Activated T-helper 1 cell treated with anti-CD3 and anti-CD28 coated beads, Interleukin-12 subunit alpha, Interleukin-12 subunit beta, Interleukin-2, Interleukin-4 antibody, amounts not matched to agents 30 ng/mL and 10 ng/mL and 1 ng/mL, durations not matched to agents 14 hours and 24 hours and 36 hours (primary cell): ENCODE measurements at regions of chr3 and their contacts with region 1.

Region 1: DNA sequence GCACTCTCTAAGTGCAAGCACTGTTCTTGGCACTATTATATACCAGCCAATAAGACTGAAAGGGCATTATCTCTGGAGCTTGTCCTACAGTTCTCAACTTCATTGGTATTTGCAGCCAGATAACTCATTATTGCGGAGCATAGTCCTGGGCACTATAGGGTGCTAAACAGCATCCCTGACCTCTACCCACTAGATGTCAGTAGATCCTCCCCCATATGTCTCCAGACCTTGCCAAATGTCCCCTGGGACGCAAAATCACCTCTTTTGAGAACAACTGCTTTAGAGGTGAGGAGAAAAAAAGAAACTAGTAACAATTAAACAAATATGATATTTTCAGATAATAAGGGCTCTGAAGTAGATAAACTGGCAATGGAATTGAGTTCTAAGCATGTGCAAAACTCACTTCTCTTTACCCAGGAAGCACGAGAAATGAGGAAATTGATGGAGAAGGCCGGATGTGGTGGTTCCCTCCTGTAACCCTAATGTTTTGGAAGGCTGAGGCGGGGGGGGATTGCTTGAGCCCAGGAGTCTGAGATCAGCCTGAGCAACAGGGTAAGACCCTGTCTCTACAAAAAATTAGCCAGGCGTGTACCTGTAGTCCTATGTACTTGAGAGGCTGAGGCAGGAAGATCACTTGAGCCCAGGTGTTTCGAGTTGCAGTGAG is 61.4 kb downstream of the FRMD4B start:
- DNase-seq: no peak
- H3K4me3 Mint-ChIP-seq: no peak overlapping the region
- H3K27ac Mint-ChIP-seq: peak overlapping the region; percentile 85
- H3K4me1 Mint-ChIP-seq: peaks cover 56% of the 10 kb centered on the region
- H3K27me3 Mint-ChIP-seq: peaks cover 1% of the 10 kb centered on the region

Region 2: DNA sequence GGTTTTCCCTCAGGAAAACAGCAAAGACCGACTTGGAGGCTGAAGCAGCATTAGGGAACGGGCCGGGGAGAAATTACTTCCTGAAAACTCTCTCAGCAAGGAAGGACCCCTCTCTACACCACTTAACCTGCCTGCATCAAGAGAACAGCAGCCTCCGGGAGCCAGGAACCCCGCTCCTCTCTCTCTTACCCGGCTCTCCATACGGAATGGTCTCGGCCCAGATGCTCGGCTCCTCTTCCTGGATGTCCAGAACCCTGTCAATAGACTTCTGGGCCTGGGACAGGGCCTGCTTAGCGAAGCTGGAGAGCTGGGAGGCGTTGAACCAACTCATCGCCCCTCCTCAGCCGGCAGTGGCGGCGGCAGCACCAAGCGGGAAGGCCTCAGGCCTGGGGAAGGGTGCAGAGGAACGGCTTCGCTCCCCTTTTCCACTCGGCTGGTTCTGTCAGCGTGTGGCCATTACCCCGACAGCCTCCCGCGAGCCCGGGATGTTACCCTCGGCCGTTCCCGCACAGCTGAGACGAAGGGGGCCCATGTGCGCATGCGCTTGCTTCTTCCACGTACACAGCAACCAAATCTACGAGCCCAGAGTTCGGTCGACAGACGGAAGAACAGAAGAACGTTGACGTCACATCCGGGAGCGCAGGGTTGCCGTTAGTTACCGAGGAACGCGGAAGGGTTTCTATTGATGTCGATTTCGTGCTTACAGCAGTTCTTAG is 272.6 kb before region 1 on chr3 and contains the start of gene TMF1:
- intact Hi-C with region 1: loop called (anchors 2 kb)
- DNase-seq: peak; percentile 96
- H3K4me3 Mint-ChIP-seq: peak within 1 kb of the TSS; percentile 97
- H3K27ac Mint-ChIP-seq: peak within 1 kb of the TSS; percentile 96
- H3K4me1 Mint-ChIP-seq: peaks cover 56% of the 10 kb centered on the region
- H3K27me3 Mint-ChIP-seq: peaks cover 1% of the 10 kb centered on the region
- total RNA-seq, gene TMF1: 43.0 and 43.1 TPM in 2 replicates

Region 3: GRCh38 chr3:69072928-69073327 is 251.6 kb before region 1 on chr3:
- intact Hi-C with region 1: no loop called
- DNase-seq: no peak
- H3K4me3 Mint-ChIP-seq: no peak overlapping the region
- H3K27ac Mint-ChIP-seq: no peak overlapping the region
- H3K4me1 Mint-ChIP-seq: peaks cover 37% of the 10 kb centered on the region
- H3K27me3 Mint-ChIP-seq: no peaks in the 10 kb centered on the region

Region 4: GRCh38 chr3:69212411-69213139 is 111.9 kb before region 1 on chr3:
- intact Hi-C with region 1: loop called (anchors 1 kb)
- DNase-seq: no peak
- H3K4me3 Mint-ChIP-seq: peak overlapping the region; percentile 43
- H3K27ac Mint-ChIP-seq: peak overlapping the region; percentile 92
- H3K4me1 Mint-ChIP-seq: peaks cover 57% of the 10 kb centered on the region
- H3K27me3 Mint-ChIP-seq: no peaks in the 10 kb centered on the region

Region 5: GRCh38 chr3:69368129-69368741 is 43.7 kb after region 1 on chr3:
- intact Hi-C with region 1: loop called (anchors 5 kb)
- DNase-seq: peak; percentile 29
- H3K4me3 Mint-ChIP-seq: peak overlapping the region; percentile 12
- H3K27ac Mint-ChIP-seq: no peak overlapping the region
- H3K4me1 Mint-ChIP-seq: peaks cover 28% of the 10 kb centered on the region
- H3K27me3 Mint-ChIP-seq: no peaks in the 10 kb centered on the region

Region 6: GRCh38 chr3:69433969-69434325 is 109.5 kb after region 1 on chr3:
- intact Hi-C with region 1: loop called (anchors 1 kb)
- DNase-seq: no peak
- H3K4me3 Mint-ChIP-seq: no peak overlapping the region
- H3K27ac Mint-ChIP-seq: peak overlapping the region; percentile 54
- H3K4me1 Mint-ChIP-seq: peaks cover 51% of the 10 kb centered on the region
- H3K27me3 Mint-ChIP-seq: no peaks in the 10 kb centered on the region

Region 7: GRCh38 chr3:69948246-69948862 is 623.9 kb after region 1 on chr3:
- intact Hi-C with region 1: loop called (anchors 10 kb)
- DNase-seq: no peak
- H3K4me3 Mint-ChIP-seq: no peak overlapping the region
- H3K27ac Mint-ChIP-seq: no peak overlapping the region
- H3K4me1 Mint-ChIP-seq: no peaks in the 10 kb centered on the region
- H3K27me3 Mint-ChIP-seq: peaks cover 5% of the 10 kb centered on the region